Activated CD4-positive, alpha-beta memory T cell treated with anti-CD3 and anti-CD28 coated beads for 36 hours (primary cell): ENCODE measurements at regions of chr10 and their contacts with region 1.

Region 1: GRCh38 chr10:110425684-110426293 is 71.9 kb upstream of the DUSP5 start:
- DNase-seq: peak; percentile 88
- H3K4me3 Mint-ChIP-seq: peak overlapping the region; percentile 30
- H3K27ac Mint-ChIP-seq: peak overlapping the region; percentile 96
- H3K4me1 Mint-ChIP-seq: peaks cover 66% of the 10 kb centered on the region
- H3K27me3 Mint-ChIP-seq: no peaks in the 10 kb centered on the region

Region 2: GRCh38 chr10:110311357-110311949 is 114.3 kb before region 1 on chr10:
- CTCF ChIA-PET with region 1: no interaction called
- POLR2A ChIA-PET with region 1: no interaction called
- intact Hi-C with region 1: loop called (anchors 5 kb)
- DNase-seq: peak; percentile 52
- H3K4me3 Mint-ChIP-seq: no peak overlapping the region
- H3K27ac Mint-ChIP-seq: peak overlapping the region; percentile 9
- H3K4me1 Mint-ChIP-seq: peaks cover 31% of the 10 kb centered on the region
- H3K27me3 Mint-ChIP-seq: peaks cover 2% of the 10 kb centered on the region

Region 3: GRCh38 chr10:110363572-110364411 is 62.0 kb before region 1 on chr10:
- CTCF ChIA-PET with region 1: no interaction called
- POLR2A ChIA-PET with region 1: interaction called, 7 read pairs
- intact Hi-C with region 1: loop called (anchors 1 kb)
- DNase-seq: peak; percentile 84
- H3K4me3 Mint-ChIP-seq: peak overlapping the region; percentile 83
- H3K27ac Mint-ChIP-seq: peak overlapping the region; percentile 98
- H3K4me1 Mint-ChIP-seq: peaks cover 86% of the 10 kb centered on the region
- H3K27me3 Mint-ChIP-seq: no peaks in the 10 kb centered on the region

Region 4: DNA sequence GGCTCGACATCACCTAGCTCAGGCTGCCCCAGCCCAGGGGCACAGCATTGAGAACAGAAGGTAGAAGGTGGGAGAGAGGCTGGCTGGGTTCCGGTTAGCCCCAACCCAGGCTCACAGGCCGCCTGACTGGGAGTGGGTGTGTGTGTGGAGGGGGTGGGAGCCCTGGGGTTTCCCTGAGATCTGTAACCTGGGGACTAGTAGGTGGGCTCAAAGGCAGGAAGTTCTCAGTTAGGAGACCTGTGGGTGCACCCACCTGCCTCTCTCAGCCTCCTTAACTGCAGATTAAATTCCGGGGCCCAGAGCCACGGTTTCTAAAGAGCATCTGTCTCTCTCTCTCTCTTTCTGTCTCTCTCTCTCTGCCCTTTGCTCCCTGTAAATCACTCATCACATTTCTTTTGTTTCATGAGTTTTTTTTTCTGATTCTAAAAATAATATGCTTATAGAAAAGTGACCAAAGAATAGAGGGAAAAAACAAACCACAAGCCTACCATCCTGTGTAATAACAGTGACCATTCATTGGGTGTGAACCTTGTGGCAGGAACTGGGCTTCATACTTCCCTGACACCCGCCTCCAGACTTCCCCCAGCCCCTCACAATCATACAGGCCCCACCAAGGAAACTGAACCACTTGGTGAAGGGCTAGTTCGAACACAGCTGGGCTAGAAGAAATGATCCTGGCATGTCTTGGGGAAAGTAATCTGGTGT is 37.7 kb before region 1 on chr10:
- CTCF ChIA-PET with region 1: interaction called, 4 read pairs
- POLR2A ChIA-PET with region 1: no interaction called
- intact Hi-C with region 1: loop called (anchors 1 kb)
- DNase-seq: peak; percentile 65
- H3K4me3 Mint-ChIP-seq: no peak overlapping the region
- H3K27ac Mint-ChIP-seq: peak overlapping the region; percentile 86
- H3K4me1 Mint-ChIP-seq: peaks cover 25% of the 10 kb centered on the region
- H3K27me3 Mint-ChIP-seq: no peaks in the 10 kb centered on the region

Region 5: GRCh38 chr10:110395725-110396651 is 29.8 kb before region 1 on chr10:
- CTCF ChIA-PET with region 1: interaction called, 3 read pairs
- POLR2A ChIA-PET with region 1: no interaction called
- intact Hi-C with region 1: loop called (anchors 1 kb)
- DNase-seq: peak; percentile 86
- H3K4me3 Mint-ChIP-seq: no peak overlapping the region
- H3K27ac Mint-ChIP-seq: peak overlapping the region; percentile 79
- H3K4me1 Mint-ChIP-seq: peaks cover 48% of the 10 kb centered on the region
- H3K27me3 Mint-ChIP-seq: no peaks in the 10 kb centered on the region

Region 6: GRCh38 chr10:110502851-110503301 is 77.1 kb after region 1 on chr10:
- CTCF ChIA-PET with region 1: no interaction called
- POLR2A ChIA-PET with region 1: interaction called, 5 read pairs
- intact Hi-C with region 1: loop called (anchors 1 kb)
- DNase-seq: peak; percentile 58
- H3K4me3 Mint-ChIP-seq: peak overlapping the region; percentile 96
- H3K27ac Mint-ChIP-seq: peak overlapping the region; percentile 97
- H3K4me1 Mint-ChIP-seq: peaks cover 78% of the 10 kb centered on the region
- H3K27me3 Mint-ChIP-seq: no peaks in the 10 kb centered on the region